Gastrocnemius medialis (tissue), 4 donors: ENCODE measurements at regions of chr14 and their contacts with region 1.

Region 1: GRCh38 chr14:105581551-105582341 is 55.4 kb downstream of the TMEM121 start:
- DNase-seq: no peak
- ATAC-seq: no peak
- H3K4me3 ChIP-seq: no peak overlapping the region
- H3K27ac ChIP-seq: no peak overlapping the region
- H3K4me1 ChIP-seq: no peaks in the 10 kb centered on the region
- H3K27me3 ChIP-seq: no peaks in the 10 kb centered on the region
- CTCF ChIP-seq: no peak
- POLR2A ChIP-seq: no peak

Region 2: DNA sequence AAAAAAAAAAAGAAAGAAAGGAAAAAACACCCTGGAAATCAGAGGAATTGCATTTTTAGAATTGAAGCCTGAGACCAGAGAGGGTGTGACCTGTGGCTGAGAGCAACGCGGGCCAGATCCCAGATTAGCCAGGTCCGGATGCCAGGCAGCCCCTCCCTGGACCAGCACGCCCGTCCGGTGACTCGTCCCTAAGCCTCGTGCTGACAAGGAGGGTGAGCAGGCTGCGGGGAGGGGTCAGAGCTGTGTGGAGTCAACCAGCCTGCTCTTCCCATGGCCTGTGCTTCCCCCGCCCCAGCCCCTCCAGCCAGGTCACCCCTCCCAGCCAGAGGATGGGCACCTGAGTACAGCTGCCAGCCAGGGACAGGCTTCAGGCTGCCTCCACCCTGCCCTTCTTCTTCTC is 1956.9 kb before region 1 on chr14:
- in situ Hi-C with region 1: no loop called
- intact Hi-C with region 1: no loop called
- DNase-seq: peak; percentile 55 to 69
- ATAC-seq: no peak
- H3K4me3 ChIP-seq: no peak overlapping the region
- H3K27ac ChIP-seq: peak overlapping the region; percentile 56 to 63 (median 60)
- H3K4me1 ChIP-seq: peaks cover 19 to 27% of the 10 kb centered on the region in 2 donors
- H3K27me3 ChIP-seq: no peaks in the 10 kb centered on the region
- CTCF ChIP-seq: no peak
- POLR2A ChIP-seq: peak in 1 of 2 donors; percentile 17

Region 3: GRCh38 chr14:105473677-105474482 is 107.9 kb before region 1 on chr14:
- in situ Hi-C with region 1: no loop called
- intact Hi-C with region 1: no loop called
- DNase-seq: peak in 1 of 2 donors; percentile 58
- ATAC-seq: peak; percentile 47 to 55
- H3K4me3 ChIP-seq: peak overlapping the region; percentile 51 to 84 (median 62)
- H3K27ac ChIP-seq: peak overlapping the region; percentile 4 to 69 (median 58)
- H3K4me1 ChIP-seq: peaks cover 41 to 57% of the 10 kb centered on the region in 2 donors
- H3K27me3 ChIP-seq: peaks cover 0 to 4% (median 0%) of the 10 kb centered on the region in 3 donors
- CTCF ChIP-seq: no peak
- POLR2A ChIP-seq: no peak

Region 4: DNA sequence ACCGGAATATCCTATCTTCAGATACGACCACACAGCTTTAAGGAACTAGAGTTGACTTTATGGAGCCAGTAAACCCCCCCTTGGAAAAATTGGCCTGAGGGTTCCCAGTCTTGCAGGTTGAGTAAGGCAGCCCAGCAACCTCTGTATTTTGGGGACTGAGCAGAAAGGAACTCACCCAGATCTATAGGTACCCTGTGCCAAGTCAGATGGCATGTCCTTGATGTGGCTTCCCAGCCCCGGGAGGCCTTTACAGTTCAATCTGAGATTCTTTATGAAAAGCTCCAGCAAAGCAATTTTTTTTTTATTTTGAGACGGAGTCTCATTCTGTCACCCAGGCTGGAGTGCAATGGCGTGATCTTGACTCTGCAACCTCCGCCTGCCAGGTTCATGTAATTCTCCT is 27.7 kb before region 1 on chr14:
- in situ Hi-C with region 1: no loop called
- intact Hi-C with region 1: no loop called
- DNase-seq: no peak
- ATAC-seq: no peak
- H3K4me3 ChIP-seq: no peak overlapping the region
- H3K27ac ChIP-seq: no peak overlapping the region
- H3K4me1 ChIP-seq: no peaks in the 10 kb centered on the region
- H3K27me3 ChIP-seq: peaks cover 0 to 4% (median 0%) of the 10 kb centered on the region in 3 donors
- CTCF ChIP-seq: no peak
- POLR2A ChIP-seq: no peak

Region 5: DNA sequence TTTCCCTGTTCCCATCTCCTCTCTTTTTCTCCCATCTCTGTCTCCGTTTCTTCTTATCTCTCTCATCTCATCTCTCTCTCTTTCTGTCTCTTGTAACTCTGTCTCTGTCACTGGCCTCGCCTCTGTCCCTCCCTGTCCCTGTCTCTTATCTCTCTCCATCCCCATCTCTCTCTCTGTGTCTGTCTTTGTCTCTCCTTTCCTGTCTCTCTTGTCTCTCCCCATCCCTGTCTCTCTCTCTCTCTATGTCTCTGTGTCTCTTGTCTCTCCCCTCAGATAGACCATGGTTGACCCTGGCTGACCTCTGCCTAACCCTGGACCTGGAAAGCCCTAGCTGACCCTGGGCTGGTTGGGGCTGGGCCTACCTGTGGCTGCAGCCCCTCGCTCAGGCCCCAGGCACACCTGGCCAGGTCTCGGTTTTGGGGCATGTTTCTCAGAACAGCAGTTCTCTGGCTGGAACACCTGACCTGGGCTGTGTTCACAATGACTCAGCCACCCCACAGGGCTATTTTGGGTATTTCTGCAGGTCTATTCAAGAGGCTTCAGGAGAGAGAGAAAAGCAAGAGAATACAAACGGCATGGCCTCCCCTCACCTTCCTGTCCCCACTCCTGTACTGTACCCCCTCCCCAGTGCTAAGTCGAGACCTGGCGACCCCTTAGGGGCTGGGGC is 119.0 kb after region 1 on chr14:
- in situ Hi-C with region 1: no loop called
- intact Hi-C with region 1: loop called (anchors 5 kb)
- DNase-seq: no peak
- ATAC-seq: peak in 1 of 2 donors; percentile 54
- H3K4me3 ChIP-seq: no peak overlapping the region
- H3K27ac ChIP-seq: no peak overlapping the region
- H3K4me1 ChIP-seq: no peaks in the 10 kb centered on the region
- H3K27me3 ChIP-seq: no peaks in the 10 kb centered on the region
- CTCF ChIP-seq: no peak
- POLR2A ChIP-seq: no peak